PC-9 (cell line): ENCODE measurements at regions of chr1 and their contacts with region 1.

Region 1: GRCh38 chr1:27341525-27342252 is at the start of gene SYTL1:
- DNase-seq: peak; percentile 64 to 82
- H3K4me3 ChIP-seq: peak within 1 kb of the TSS; percentile 70
- H3K27ac ChIP-seq: peak within 1 kb of the TSS; percentile 77
- H3K4me1 ChIP-seq: peaks cover 24% of the 10 kb centered on the region
- H3K27me3 ChIP-seq: no peaks in the 10 kb centered on the region
- CTCF ChIP-seq: no peak
- total RNA-seq, gene SYTL1: 43.7 and 49.8 TPM in 2 replicates

Region 2: DNA sequence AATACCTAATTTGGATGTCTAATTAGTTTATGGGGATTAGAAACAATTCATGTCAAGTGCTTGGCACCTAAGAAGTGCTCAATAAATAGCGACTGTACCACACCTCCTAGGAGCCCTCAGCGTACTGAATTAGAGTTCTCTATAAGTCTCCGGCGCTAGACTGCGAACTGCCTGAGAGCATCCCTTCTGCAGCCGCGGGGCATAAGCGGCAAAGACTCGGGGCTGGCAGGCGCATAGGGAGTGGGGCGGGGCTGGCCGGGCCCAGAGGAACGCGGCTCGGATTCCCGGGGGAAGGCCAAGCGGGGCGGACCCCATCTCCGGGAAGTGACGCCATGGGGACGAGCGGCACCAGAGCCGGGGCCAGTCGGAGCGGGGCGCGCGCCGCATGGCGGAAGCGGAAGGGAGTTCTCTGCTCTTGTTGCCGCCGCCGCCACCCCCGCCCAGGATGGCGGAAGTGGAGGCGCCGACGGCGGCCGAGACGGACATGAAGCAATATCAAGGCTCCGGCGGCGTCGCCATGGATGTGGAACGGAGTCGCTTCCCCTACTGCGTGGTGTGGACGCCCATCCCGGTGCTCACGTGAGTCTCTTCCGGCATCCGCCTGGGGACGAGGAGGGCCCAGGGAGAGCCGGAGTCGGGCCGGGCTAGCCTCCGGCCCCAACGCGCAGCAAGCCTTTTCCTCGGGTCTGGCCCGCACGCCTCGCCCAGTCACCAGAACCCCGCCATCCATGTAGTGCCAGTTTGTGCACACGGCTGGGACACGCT is 19.7 kb before region 1 on chr1 and contains the start of gene TMEM222:
- CTCF ChIA-PET with region 1: no interaction called
- POLR2A ChIA-PET with region 1: interaction called, 7 read pairs
- intact Hi-C with region 1: loop called (anchors 1 kb)
- DNase-seq: peak; percentile 87 to 96
- H3K4me3 ChIP-seq: peak within 1 kb of the TSS; percentile 90
- H3K27ac ChIP-seq: peak within 1 kb of the TSS; percentile 51
- H3K4me1 ChIP-seq: peaks cover 9% of the 10 kb centered on the region
- H3K27me3 ChIP-seq: no peaks in the 10 kb centered on the region
- CTCF ChIP-seq: no peak
- total RNA-seq, gene TMEM222: 32.0 and 32.8 TPM in 2 replicates

Region 3: DNA sequence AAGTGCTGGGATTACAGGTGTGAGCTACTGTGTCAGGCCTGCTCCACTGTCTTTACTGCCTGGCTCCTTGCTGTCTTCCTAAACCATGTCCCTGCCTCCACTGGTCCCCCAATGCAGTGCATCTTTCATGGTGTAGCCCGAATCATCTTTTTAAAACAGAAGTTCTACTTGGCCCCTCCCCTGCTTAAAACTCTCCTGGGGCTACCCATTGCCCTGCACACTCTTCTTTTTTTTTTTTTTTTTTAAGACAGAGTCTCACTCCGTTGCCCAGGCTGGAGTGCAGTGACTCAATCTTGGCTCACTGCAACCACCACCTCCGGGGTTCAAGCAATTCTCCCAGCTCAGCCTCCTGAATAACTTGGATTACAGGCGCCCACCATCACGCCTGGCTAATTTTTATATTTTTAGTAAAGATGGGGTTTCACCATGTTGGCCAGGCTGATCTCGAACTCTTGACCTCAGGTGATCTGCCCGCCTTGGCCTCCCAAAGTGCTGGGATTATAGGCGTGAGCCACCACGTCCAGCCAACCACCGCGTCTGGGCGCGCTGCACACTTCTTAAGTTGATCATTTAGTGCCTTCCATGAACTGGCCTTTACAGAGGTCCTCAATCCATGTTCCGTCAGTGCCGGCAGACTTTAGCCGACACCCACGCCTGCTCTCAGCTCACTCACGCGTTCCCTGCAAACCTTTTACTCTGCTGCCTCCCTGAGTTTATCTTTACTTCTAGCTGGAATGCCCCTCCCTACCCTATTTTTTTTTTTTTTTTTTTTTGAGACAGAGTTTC is 30.5 kb after region 1 on chr1:
- CTCF ChIA-PET with region 1: no interaction called
- POLR2A ChIA-PET with region 1: interaction called, 19 read pairs
- intact Hi-C with region 1: no loop called
- DNase-seq: no peak
- H3K4me3 ChIP-seq: no peak overlapping the region
- H3K27ac ChIP-seq: no peak overlapping the region
- H3K4me1 ChIP-seq: 0 out of 2 replicates have a peak, but pooled peaks cover 1% of the 10 kb centered on the region
- H3K27me3 ChIP-seq: no peaks in the 10 kb centered on the region
- CTCF ChIP-seq: no peak